ENCODE measurements at regions of chr6 and their contacts with region 1.

Region 1: GRCh38 chr6:143575440-143575839 is 63.9 kb upstream of the FUCA2 start:
- DNase-seq: peak in 11 of 14 experiments; percentile 18 to 85 (median 41)
- ATAC-seq: peak; percentile 99
- H3K4me3 ChIP-seq: no peak overlapping the region
- H3K4me3 Mint-ChIP-seq: no peak overlapping the region
- H3K27ac ChIP-seq: no peak overlapping the region
- H3K27ac Mint-ChIP-seq: no peak overlapping the region
- H3K4me1 ChIP-seq: no peaks in the 10 kb centered on the region
- H3K4me1 Mint-ChIP-seq: no peaks in the 10 kb centered on the region
- H3K27me3 ChIP-seq: no peaks in the 10 kb centered on the region
- H3K27me3 Mint-ChIP-seq: no peaks in the 10 kb centered on the region
- CTCF ChIP-seq: peak; percentile 85

Region 2: GRCh38 chr6:143385636-143386035 is 189.8 kb before region 1 on chr6:
- CTCF ChIA-PET with region 1: no interaction called
- POLR2A ChIA-PET with region 1: no interaction called
- intact Hi-C with region 1: no loop called
- DNase-seq: no peak
- ATAC-seq: no peak
- H3K4me3 ChIP-seq: no peak overlapping the region
- H3K4me3 Mint-ChIP-seq: no peak overlapping the region
- H3K27ac ChIP-seq: no peak overlapping the region
- H3K27ac Mint-ChIP-seq: no peak overlapping the region
- H3K4me1 ChIP-seq: no peaks in the 10 kb centered on the region
- H3K4me1 Mint-ChIP-seq: no peaks in the 10 kb centered on the region
- H3K27me3 ChIP-seq: no peaks in the 10 kb centered on the region
- H3K27me3 Mint-ChIP-seq: peaks cover 5% of the 10 kb centered on the region
- CTCF ChIP-seq: no peak

Region 3: DNA sequence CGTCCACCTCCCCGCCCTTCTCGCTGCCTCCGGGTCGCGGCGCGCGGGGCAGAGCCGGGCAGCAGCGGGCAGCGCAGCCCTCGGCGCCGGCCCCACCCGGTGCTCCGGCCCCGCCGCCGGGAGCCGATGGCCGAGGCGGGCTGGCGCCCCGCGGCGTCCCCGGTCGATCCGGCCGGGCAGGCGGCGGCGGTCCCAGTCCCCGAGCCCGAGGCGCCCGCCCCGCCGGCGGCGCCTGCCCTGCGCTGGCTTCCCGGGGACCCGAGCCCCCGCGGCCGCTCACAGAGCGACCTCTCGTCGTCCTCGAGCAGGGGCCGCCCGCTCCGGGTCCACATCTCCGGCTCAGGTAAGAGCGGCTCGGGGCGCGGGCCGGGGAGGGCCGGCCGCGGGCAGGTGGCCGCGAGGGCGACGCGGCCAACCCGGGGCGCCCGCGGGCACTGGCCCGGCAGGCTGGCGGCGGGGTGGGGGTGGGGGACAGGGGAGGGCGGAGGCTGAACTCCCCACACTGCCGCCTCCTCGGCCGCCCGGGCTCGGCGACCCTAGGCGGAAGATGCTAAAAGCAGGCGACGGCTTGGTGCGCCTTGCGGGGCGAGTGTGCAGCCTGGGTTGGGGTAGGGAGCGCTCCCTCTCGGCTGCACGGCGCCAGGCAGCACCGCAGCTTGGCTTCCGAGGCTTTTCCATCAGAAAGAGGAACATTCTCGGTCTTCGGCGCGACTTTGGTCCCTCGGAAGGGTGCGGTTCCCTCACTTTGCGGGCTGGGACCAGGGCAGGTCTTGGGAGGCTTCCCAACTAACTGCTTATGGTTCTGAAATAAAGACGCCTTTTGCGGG is 38.4 kb before region 1 on chr6:
- CTCF ChIA-PET with region 1: interaction called, 13 read pairs
- POLR2A ChIA-PET with region 1: interaction called, 10 read pairs
- intact Hi-C with region 1: no loop called
- DNase-seq: peak; percentile 35 to 84 (median 58)
- ATAC-seq: peak; percentile 65
- H3K4me3 ChIP-seq: peak overlapping the region; percentile 57
- H3K4me3 Mint-ChIP-seq: peak overlapping the region; percentile 91
- H3K27ac ChIP-seq: peak overlapping the region; percentile 14 to 82
- H3K27ac Mint-ChIP-seq: peak overlapping the region; percentile 95
- H3K4me1 ChIP-seq: peaks cover 52% of the 10 kb centered on the region
- H3K4me1 Mint-ChIP-seq: peaks cover 51% of the 10 kb centered on the region
- H3K27me3 ChIP-seq: no peaks in the 10 kb centered on the region
- H3K27me3 Mint-ChIP-seq: no peaks in the 10 kb centered on the region
- CTCF ChIP-seq: peak; percentile 21

Region 4: DNA sequence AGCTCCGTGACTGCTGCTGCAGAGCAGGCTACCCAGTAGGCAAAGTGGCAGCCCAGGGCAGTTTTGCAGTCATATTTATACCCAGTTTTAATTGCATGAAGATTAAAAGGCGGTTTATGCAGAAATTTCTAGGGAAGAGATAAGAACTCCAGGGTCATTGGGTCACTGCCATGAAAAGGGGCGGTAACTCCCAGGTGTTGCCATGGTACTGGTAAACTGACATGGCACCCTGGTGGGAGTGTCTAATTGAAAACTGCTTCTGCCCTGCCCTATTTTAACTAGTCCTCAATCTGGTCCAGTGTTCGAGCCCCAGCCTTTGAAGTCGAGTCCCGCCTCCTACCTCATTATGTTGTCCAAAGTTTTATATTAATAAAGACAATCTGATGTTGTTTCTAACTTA is 11.1 kb after region 1 on chr6:
- CTCF ChIA-PET with region 1: interaction called, 13 read pairs
- POLR2A ChIA-PET with region 1: interaction called, 3 read pairs
- intact Hi-C with region 1: no loop called
- DNase-seq: no peak
- ATAC-seq: no peak
- H3K4me3 ChIP-seq: no peak overlapping the region
- H3K4me3 Mint-ChIP-seq: no peak overlapping the region
- H3K27ac ChIP-seq: no peak overlapping the region
- H3K27ac Mint-ChIP-seq: no peak overlapping the region
- H3K4me1 ChIP-seq: peaks cover 5% of the 10 kb centered on the region
- H3K4me1 Mint-ChIP-seq: peaks cover 5% of the 10 kb centered on the region
- H3K27me3 ChIP-seq: no peaks in the 10 kb centered on the region
- H3K27me3 Mint-ChIP-seq: no peaks in the 10 kb centered on the region
- CTCF ChIP-seq: no peak

Region 5: GRCh38 chr6:143940011-143940597 is 364.7 kb after region 1 on chr6:
- CTCF ChIA-PET with region 1: interaction called, 11 read pairs
- POLR2A ChIA-PET with region 1: interaction called, 4 read pairs
- intact Hi-C with region 1: loop called (anchors 2 to 5 kb)
- DNase-seq: peak; percentile 34 to 79 (median 44)
- ATAC-seq: peak; percentile 97
- H3K4me3 ChIP-seq: no peak overlapping the region
- H3K4me3 Mint-ChIP-seq: no peak overlapping the region
- H3K27ac ChIP-seq: no peak overlapping the region
- H3K27ac Mint-ChIP-seq: no peak overlapping the region
- H3K4me1 ChIP-seq: peaks cover 8% of the 10 kb centered on the region
- H3K4me1 Mint-ChIP-seq: peaks cover 6% of the 10 kb centered on the region
- H3K27me3 ChIP-seq: no peaks in the 10 kb centered on the region
- H3K27me3 Mint-ChIP-seq: no peaks in the 10 kb centered on the region
- CTCF ChIP-seq: peak; percentile 86

Region 6: DNA sequence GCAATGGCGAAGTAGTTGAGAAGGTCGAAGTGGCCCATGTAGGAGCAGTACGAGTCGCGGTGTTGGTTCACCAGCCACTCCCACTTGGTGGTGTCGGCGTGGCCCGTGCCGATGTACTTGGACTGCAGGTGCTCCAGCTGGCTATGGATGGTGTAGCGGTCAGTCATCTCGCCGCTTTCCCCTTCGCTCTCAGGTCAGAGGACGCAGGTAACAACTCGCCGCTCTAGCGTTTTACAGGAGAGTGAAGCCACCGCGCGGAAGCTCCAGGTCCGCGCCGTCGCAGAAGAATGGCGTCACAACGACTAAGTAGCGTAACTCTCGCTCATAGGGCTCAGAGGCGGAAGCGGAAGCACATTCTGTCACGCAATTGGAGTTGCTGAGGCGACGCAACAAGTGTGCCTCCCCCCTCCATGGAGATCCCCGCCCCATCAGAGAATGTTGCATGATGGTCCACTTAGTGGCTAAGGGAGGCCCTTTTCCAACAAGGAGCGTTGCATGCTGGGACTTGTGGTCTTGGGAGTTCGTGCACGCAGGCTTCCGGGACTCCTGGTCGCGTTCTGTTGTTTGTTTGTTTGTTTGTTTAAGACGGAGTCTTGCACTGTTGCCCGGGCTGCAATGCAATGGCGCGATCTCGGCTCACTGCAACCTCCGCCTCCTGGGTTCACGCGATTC is 520.0 kb after region 1 on chr6 and contains the start of gene SF3B5:
- CTCF ChIA-PET with region 1: no interaction called
- POLR2A ChIA-PET with region 1: no interaction called
- intact Hi-C with region 1: loop called (anchors 10 kb)
- DNase-seq: peak; percentile 93 to 100 (median 97)
- ATAC-seq: peak; percentile 96
- H3K4me3 ChIP-seq: peak within 1 kb of the TSS; percentile 83
- H3K4me3 Mint-ChIP-seq: peak within 1 kb of the TSS; percentile 98
- H3K27ac ChIP-seq: peak within 1 kb of the TSS; percentile 84 to 94
- H3K27ac Mint-ChIP-seq: peak within 1 kb of the TSS; percentile 96
- H3K4me1 ChIP-seq: peaks cover 24% of the 10 kb centered on the region
- H3K4me1 Mint-ChIP-seq: peaks cover 30% of the 10 kb centered on the region
- H3K27me3 ChIP-seq: no peaks in the 10 kb centered on the region
- H3K27me3 Mint-ChIP-seq: no peaks in the 10 kb centered on the region
- CTCF ChIP-seq: no peak
- total RNA-seq, gene SF3B5: 113 to 124 TPM

Region 7: GRCh38 chr6:144482142-144482541 is 906.7 kb after region 1 on chr6:
- CTCF ChIA-PET with region 1: interaction called, 5 read pairs
- POLR2A ChIA-PET with region 1: no interaction called
- intact Hi-C with region 1: loop called (anchors 2 to 10 kb)
- DNase-seq: peak; percentile 55 to 81 (median 68)
- ATAC-seq: peak; percentile 77
- H3K4me3 ChIP-seq: no peak overlapping the region
- H3K4me3 Mint-ChIP-seq: no peak overlapping the region
- H3K27ac ChIP-seq: no peak overlapping the region
- H3K27ac Mint-ChIP-seq: peak overlapping the region; percentile 31
- H3K4me1 ChIP-seq: no peaks in the 10 kb centered on the region
- H3K4me1 Mint-ChIP-seq: no peaks in the 10 kb centered on the region
- H3K27me3 ChIP-seq: no peaks in the 10 kb centered on the region
- H3K27me3 Mint-ChIP-seq: no peaks in the 10 kb centered on the region
- CTCF ChIP-seq: peak; percentile 82